ENCODE measurements at regions of chr4 and their contacts with region 1.

Region 1: GRCh38 chr4:128454281-128455075 is 166.9 kb upstream of the PGRMC2 start:
- DNase-seq: peak; percentile 95
- H3K4me3 ChIP-seq: no peak overlapping the region
- H3K27ac ChIP-seq: peak overlapping the region in 2 of 4 donors; percentile 27 to 49
- H3K4me1 ChIP-seq: peaks cover 0 to 48% (median 30%) of the 10 kb centered on the region in 4 donors
- H3K27me3 ChIP-seq: no peaks in the 10 kb centered on the region
- CTCF ChIP-seq: peak; percentile 73 to 86 (median 76)
- EP300 ChIP-seq: no peak
- POLR2A ChIP-seq: no peak

Region 2: GRCh38 chr4:128191115-128191781 is 263.2 kb before region 1 on chr4:
- intact Hi-C with region 1: loop called (anchors 5 kb)
- DNase-seq: peak; percentile 77
- H3K4me3 ChIP-seq: no peak overlapping the region
- H3K27ac ChIP-seq: no peak overlapping the region
- H3K4me1 ChIP-seq: peaks cover 0 to 9% (median 2%) of the 10 kb centered on the region in 4 donors
- H3K27me3 ChIP-seq: no peaks in the 10 kb centered on the region
- CTCF ChIP-seq: peak; percentile 78 to 86 (median 84)
- EP300 ChIP-seq: no peak
- POLR2A ChIP-seq: no peak

Region 3: GRCh38 chr4:128553686-128554515 is 99.4 kb after region 1 on chr4:
- intact Hi-C with region 1: loop called (anchors 2 kb)
- DNase-seq: no peak
- H3K4me3 ChIP-seq: peak overlapping the region; percentile 45 to 58 (median 56)
- H3K27ac ChIP-seq: peak overlapping the region; percentile 91 to 92 (median 92)
- H3K4me1 ChIP-seq: peaks cover 0 to 30% (median 21%) of the 10 kb centered on the region in 4 donors
- H3K27me3 ChIP-seq: no peaks in the 10 kb centered on the region
- CTCF ChIP-seq: no peak
- EP300 ChIP-seq: no peak
- POLR2A ChIP-seq: no peak

Region 4: DNA sequence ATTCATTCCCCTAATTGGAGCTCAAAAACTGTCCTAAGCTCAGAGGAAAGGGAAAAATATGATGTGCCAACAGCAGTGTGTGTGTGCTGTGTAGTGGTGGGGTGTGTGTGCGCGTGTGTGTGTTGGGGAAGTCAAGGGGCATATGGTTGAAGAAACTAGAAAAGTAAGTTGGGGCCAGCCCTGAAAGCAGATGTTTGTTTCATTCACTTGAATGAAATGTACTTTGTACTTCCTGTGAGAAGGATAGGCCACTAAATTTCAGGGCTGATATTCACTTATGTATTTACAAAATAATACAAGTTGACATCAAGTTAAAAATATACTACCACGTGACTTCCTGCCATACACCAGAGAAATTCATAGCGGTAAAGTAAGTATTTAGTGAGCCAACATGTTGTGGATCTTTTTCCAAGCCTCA is 203.7 kb after region 1 on chr4:
- intact Hi-C with region 1: loop called (anchors 2 kb)
- DNase-seq: no peak
- H3K4me3 ChIP-seq: no peak overlapping the region
- H3K27ac ChIP-seq: peak overlapping the region; percentile 82 to 85 (median 84)
- H3K4me1 ChIP-seq: peaks cover 0 to 80% (median 70%) of the 10 kb centered on the region in 4 donors
- H3K27me3 ChIP-seq: no peaks in the 10 kb centered on the region
- CTCF ChIP-seq: no peak
- EP300 ChIP-seq: peak in 2 of 4 donors; percentile 17 to 49
- POLR2A ChIP-seq: no peak

Region 5: DNA sequence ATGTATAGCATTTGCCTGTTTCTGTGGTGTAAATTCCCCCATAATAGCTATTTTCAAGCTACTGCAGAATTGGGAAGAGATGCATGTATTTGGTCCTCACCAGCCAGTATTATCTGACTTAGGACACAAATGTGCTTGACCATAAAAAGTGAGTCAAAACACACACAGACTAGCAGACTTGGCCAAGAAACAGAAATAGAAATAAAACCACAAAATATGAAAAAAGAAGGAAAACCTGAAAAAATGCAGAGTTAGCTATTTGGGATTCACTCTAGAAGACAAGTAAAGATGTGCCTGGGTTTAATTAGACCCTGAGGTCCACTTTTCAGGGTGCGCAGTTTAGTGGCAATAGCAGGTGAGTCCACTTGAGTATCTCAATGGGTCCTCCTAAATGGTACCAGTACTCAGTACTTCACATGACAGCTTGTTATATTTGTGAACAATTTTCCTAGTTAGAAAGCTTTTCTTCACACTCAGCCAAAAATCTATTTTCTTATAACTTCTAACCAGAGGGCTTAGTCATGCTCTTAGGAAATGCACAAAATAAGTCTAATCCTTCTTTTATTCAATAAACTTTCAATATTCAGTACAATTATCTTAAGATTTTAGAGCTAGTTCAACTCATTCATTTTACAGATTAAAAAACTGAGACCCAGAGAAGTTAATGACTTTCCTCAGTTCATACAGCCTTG is 246.3 kb after region 1 on chr4:
- intact Hi-C with region 1: no loop called
- DNase-seq: no peak
- H3K4me3 ChIP-seq: no peak overlapping the region
- H3K27ac ChIP-seq: no peak overlapping the region
- H3K4me1 ChIP-seq: no peaks in the 10 kb centered on the region
- H3K27me3 ChIP-seq: no peaks in the 10 kb centered on the region
- CTCF ChIP-seq: no peak
- EP300 ChIP-seq: no peak
- POLR2A ChIP-seq: no peak

Region 6: GRCh38 chr4:129093191-129093920 is 638.9 kb after region 1 on chr4 and contains the start of gene SCLT1:
- intact Hi-C with region 1: loop called (anchors 5 kb)
- DNase-seq: peak; percentile 99
- H3K4me3 ChIP-seq: peak within 1 kb of the TSS; percentile 77 to 88 (median 78)
- H3K27ac ChIP-seq: peak within 1 kb of the TSS; percentile 96 to 98 (median 96)
- H3K4me1 ChIP-seq: peaks cover 0 to 24% (median 18%) of the 10 kb centered on the region in 4 donors
- H3K27me3 ChIP-seq: no peaks in the 10 kb centered on the region
- CTCF ChIP-seq: no peak
- EP300 ChIP-seq: peak in 1 of 4 donors; percentile 12
- POLR2A ChIP-seq: peak; percentile 61 to 84
- total RNA-seq, gene SCLT1: 9.9 to 18.8 (median 14.0) TPM